Psoas muscle (tissue), 8 donors: ENCODE measurements at regions of chr1 and their contacts with region 1.

Region 1: DNA sequence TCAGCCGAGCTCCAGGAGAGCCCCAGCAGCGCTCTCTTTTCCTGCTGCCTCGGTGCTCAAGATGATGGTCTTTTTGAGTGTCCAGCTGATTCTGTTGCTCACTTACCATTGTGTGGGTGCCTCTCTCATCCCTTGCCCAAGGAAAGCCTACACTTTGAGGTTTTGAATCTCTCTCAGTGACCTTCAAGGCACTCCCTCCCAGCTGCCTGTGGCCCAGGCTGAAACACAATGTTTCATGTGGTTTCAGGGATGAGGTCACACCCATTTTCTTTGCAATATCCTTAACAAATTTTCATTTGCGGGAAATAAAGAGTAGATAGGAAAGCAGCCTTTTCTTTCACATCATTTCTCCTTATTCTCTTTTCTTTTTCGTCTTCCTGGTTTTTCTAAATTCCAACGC is 12.6 kb upstream of the MRPS14 start:
- DNase-seq: no peak
- ATAC-seq: no peak
- H3K4me3 ChIP-seq: no peak overlapping the region
- H3K27ac ChIP-seq: no peak overlapping the region
- H3K4me1 ChIP-seq: no peaks in the 10 kb centered on the region
- H3K27me3 ChIP-seq: no peaks in the 10 kb centered on the region
- CTCF ChIP-seq: no peak

Region 2: GRCh38 chr1:174753131-174753530 is 282.7 kb before region 1 on chr1:
- intact Hi-C with region 1: no loop called
- DNase-seq: no peak
- ATAC-seq: no peak
- H3K4me3 ChIP-seq: no peak overlapping the region
- H3K27ac ChIP-seq: no peak overlapping the region
- H3K4me1 ChIP-seq: no peaks in the 10 kb centered on the region
- H3K27me3 ChIP-seq: no peaks in the 10 kb centered on the region
- CTCF ChIP-seq: no peak

Region 3: GRCh38 chr1:175124861-175125260 is 89.0 kb after region 1 on chr1:
- intact Hi-C with region 1: loop called in 1 of 2 experiments (anchors 2 kb)
- DNase-seq: no peak
- ATAC-seq: peak in 1 of 4 donors; percentile 41
- H3K4me3 ChIP-seq: no peak overlapping the region
- H3K27ac ChIP-seq: no peak overlapping the region
- H3K4me1 ChIP-seq: no peaks in the 10 kb centered on the region
- H3K27me3 ChIP-seq: no peaks in the 10 kb centered on the region
- CTCF ChIP-seq: no peak

Region 4: DNA sequence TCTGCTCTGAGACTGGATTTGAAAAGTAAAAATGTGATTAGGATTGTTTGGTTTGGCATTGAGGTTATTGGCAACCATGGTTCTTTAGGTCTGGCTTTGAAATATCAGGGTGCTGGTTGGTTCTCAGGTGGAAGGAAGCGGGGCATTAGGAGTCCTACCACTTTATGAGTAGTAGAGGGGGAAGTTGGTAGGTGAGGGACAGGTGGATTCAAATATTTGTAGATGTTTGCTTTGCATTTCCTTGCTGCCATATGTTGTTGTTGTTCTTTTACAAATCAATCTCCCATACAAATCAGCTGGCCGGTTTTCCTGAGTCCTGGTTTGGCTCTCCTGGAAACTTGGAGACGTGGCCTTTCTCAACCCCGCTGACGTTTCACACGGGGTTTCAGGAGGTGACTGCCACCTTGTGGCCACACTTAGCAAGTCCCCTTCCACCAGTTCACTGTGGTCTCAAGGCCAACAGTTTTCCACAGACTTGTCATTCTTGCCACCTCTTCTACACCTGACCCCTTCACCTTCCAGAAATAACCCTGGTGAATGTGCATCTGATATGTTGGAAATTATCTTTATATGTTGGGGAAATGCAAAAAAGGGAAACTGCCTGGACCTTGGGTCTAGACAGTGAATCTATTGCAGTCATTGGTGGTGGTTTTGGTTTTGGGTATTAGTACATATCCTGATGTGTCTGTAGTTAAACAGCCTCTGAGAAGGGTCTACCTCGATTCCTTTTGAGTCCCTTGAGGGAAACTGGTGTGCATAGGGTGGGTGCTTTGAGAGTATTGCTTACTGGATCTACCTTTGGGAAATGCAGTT is 283.8 kb after region 1 on chr1:
- intact Hi-C with region 1: loop called in 1 of 2 experiments (anchors 10 kb)
- DNase-seq: peak; percentile 75 to 87
- ATAC-seq: peak; percentile 92 to 95 (median 92)
- H3K4me3 ChIP-seq: no peak overlapping the region
- H3K27ac ChIP-seq: no peak overlapping the region
- H3K4me1 ChIP-seq: peaks cover 4% of the 10 kb centered on the region
- H3K27me3 ChIP-seq: no peaks in the 10 kb centered on the region
- CTCF ChIP-seq: peak; percentile 95